ENCODE measurements at regions of chr22 and their contacts with region 1.

Region 1: GRCh38 chr22:19143967-19144400 is 467 bp downstream of the ESS2 start:
- DNase-seq: peak; percentile 46
- H3K4me3 Mint-ChIP-seq: peak overlapping the region; percentile 98
- H3K27ac Mint-ChIP-seq: peak overlapping the region; percentile 97
- H3K4me1 Mint-ChIP-seq: peaks cover 7% of the 10 kb centered on the region
- H3K27me3 Mint-ChIP-seq: peaks cover 25% of the 10 kb centered on the region

Region 2: DNA sequence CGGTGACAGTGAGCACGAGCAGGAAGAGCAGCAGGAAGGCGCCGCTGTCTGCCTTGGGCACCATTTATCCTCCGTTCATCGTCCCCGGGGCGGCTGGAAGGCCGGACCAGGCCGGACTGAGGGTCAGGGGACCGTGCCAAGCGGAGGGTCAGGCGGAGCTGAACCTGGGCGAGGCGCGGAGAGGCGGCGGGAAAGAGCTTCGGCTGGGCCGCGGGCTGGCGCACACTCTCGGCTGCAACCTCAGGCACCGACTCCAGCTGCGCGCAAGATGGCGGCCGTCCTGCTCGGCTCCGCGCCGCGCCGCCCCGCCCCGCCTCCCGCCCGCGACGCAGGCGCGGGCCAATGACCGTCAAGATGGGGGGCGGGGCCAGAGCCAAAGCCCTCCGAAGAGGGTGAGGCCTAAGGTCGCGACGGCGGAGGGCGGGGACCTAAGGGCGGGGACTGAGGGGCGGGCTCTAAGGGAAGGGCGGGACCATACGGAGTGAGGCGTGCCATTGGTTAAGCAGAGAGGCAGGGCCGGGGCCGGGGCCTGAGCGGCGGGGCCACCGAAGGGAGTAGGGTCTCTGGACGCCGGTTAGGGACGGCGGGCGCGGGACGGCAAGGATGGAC is 21.7 kb before region 1 on chr22 and contains the start of gene DGCR2:
- intact Hi-C with region 1: loop called (anchors 1 kb)
- DNase-seq: peak; percentile 89
- H3K4me3 Mint-ChIP-seq: peak within 1 kb of the TSS; percentile 83
- H3K27ac Mint-ChIP-seq: no peak within 1 kb of the TSS
- H3K4me1 Mint-ChIP-seq: peaks cover 27% of the 10 kb centered on the region
- H3K27me3 Mint-ChIP-seq: peaks cover 2% of the 10 kb centered on the region
- total RNA-seq, gene DGCR2: 20.8 and 22.5 TPM in 2 replicates

Region 3: DNA sequence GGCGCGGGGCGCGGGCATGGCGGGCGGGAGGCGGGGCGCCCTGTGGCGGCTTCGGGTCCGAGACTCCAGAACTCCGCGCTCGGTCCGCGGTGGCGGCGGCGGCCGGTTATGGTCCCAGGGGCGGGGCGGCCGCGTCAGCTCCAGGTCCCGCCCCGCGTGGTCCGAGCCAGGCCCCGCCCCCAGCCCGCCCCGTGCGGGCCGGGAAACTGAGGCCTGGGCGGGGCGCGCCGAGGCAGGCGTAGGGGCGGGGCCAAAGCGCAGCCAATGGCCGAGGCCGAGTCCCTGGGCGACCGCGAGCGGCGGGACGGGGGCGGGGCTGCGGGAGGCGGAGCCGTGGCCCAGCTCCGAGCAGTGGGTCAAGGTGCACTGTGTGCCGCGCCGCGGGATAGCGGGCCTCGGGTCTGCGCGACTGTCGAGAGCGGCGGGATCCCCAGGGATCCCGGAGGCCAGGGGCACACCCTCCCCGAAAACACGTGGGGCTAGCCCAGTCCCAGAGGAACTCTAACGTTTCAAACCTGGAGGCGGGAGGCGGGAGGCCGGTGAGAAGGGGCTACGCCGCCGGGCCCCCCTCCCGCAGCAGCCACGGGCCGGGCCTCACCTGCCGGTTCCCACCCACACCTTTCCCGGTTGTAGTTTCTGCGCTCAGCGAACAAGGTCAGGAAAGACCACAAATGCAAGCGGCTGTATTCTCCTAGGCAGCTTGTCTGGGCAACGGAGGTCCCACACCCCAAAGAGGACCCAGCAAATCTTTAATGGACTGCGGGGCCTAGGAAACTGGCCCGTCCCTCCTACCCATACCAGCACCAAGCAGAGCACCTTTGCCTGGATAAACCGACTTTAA is 34.9 kb after region 1 on chr22 and contains the start of gene SLC25A1:
- intact Hi-C with region 1: loop called (anchors 2 kb)
- DNase-seq: peak; percentile 82
- H3K4me3 Mint-ChIP-seq: peak within 1 kb of the TSS; percentile 79
- H3K27ac Mint-ChIP-seq: peak within 1 kb of the TSS; percentile 58
- H3K4me1 Mint-ChIP-seq: peaks cover 18% of the 10 kb centered on the region
- H3K27me3 Mint-ChIP-seq: no peaks in the 10 kb centered on the region
- total RNA-seq, gene SLC25A1: 52.0 and 53.1 TPM in 2 replicates

Region 4: GRCh38 chr22:19629720-19630419 is 485.9 kb after region 1 on chr22:
- intact Hi-C with region 1: loop called (anchors 1 kb)
- DNase-seq: peak; percentile 70
- H3K4me3 Mint-ChIP-seq: no peak overlapping the region
- H3K27ac Mint-ChIP-seq: no peak overlapping the region
- H3K4me1 Mint-ChIP-seq: peaks cover 2% of the 10 kb centered on the region
- H3K27me3 Mint-ChIP-seq: peaks cover 5% of the 10 kb centered on the region

Measured in activated T-helper 2 cell treated with anti-CD3 and anti-CD28 coated beads, Interferon-gamma antibody, Interleukin-2, Interleukin-4, amounts not matched to agents 10 μg/mL and 5 μg/mL and 100 μg/mL, durations not matched to agents 14 hours and 24 hours and 36 hours (primary cell).